Activated T-helper 1 cell treated with anti-CD3 and anti-CD28 coated beads, Interleukin-12 subunit alpha, Interleukin-12 subunit beta, Interleukin-2, Interleukin-4 antibody, amounts not matched to agents 30 ng/mL and 10 ng/mL and 1 ng/mL, durations not matched to agents 14 hours and 24 hours and 36 hours (primary cell): ENCODE measurements at regions of chr1 and their contacts with region 1.

Region 1: DNA sequence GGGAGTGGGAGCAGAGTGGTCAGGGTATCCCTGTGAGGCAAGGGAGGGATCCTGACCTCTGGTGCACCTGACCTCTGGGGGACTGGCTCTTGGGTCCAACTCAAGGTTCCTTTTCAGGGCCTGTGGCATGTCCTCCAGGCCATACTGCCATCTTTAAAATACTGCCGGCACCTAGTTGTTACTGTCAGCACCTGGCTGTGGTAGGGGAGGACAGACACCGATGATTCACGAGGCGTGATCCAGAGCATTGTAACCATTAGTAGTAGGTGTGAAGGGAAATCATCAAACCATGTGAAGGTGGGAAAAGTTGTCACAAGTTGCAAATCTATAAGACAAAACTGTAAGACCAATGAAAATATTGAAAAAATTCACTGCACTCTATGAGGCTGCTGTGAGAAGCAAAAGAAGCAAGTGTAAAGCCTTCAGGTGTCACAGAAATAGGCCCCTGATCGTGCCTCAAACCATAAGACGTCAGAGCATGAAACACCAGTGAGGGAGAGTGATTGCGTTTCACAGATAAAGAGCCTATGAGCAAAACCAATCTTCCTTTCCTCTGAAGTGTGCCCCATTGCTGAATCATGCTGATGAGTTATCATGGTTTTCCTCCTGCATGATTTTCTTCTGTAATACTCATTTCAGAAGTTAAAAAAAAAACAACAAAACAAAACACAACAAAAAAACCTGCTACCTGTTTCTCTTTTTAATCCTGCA is 55.3 kb downstream of the CDC7 start:
- DNase-seq: peak; percentile 79
- H3K4me3 Mint-ChIP-seq: peak overlapping the region; percentile 67
- H3K27ac Mint-ChIP-seq: peak overlapping the region; percentile 83
- H3K4me1 Mint-ChIP-seq: peaks cover 90% of the 10 kb centered on the region
- H3K27me3 Mint-ChIP-seq: no peaks in the 10 kb centered on the region

Region 2: GRCh38 chr1:91412371-91412770 is 143.6 kb before region 1 on chr1:
- intact Hi-C with region 1: no loop called
- DNase-seq: no peak
- H3K4me3 Mint-ChIP-seq: no peak overlapping the region
- H3K27ac Mint-ChIP-seq: no peak overlapping the region
- H3K4me1 Mint-ChIP-seq: no peaks in the 10 kb centered on the region
- H3K27me3 Mint-ChIP-seq: peaks cover 21% of the 10 kb centered on the region

Region 3: DNA sequence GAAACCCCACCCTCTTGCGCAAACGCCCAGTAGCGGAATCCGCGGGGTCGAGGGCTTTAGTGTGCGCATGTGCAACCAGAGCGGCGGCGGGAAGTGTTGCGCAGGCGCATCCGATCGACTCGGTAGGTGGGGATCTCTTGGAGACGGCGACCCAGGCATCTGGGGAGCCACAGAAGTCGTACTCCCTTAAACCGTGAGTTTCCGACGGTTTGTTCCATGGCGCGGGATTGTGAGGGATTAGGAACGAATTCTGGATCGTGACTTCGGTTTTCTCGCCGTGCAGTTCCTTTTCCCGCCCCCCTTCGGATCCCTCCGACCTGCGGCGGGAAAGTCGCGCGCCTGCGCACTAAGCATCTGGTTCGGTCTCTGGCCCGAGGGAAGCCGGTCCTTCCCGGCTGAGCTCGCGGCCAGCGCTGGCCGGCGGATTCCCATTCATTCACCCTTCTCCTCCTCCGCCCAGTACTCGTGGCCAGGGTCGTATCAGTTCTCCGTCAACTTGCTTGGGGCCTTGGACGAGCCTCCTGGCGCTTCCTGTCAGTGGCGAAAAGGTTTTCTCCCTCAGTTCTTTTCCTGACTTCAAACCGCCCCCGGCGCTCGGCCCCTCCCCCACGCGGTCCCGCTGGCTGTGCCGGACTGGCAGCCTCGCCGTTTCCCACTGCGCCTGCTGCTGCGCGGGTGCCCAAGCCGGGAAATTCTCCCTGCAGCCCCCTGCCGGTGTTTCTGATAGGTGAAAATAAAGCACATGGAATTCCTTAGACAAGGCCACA is 55.0 kb before region 1 on chr1 and contains the start of gene CDC7:
- intact Hi-C with region 1: loop called (anchors 2 kb)
- DNase-seq: peak; percentile 81
- H3K4me3 Mint-ChIP-seq: no peak within 1 kb of the TSS
- H3K27ac Mint-ChIP-seq: no peak within 1 kb of the TSS
- H3K4me1 Mint-ChIP-seq: peaks cover 34% of the 10 kb centered on the region
- H3K27me3 Mint-ChIP-seq: no peaks in the 10 kb centered on the region
- total RNA-seq, gene CDC7: 19.9 and 23.1 TPM in 2 replicates

Region 4: GRCh38 chr1:91545506-91546300 is 10.3 kb before region 1 on chr1:
- intact Hi-C with region 1: no loop called
- DNase-seq: no peak
- H3K4me3 Mint-ChIP-seq: no peak overlapping the region
- H3K27ac Mint-ChIP-seq: no peak overlapping the region
- H3K4me1 Mint-ChIP-seq: peaks cover 63% of the 10 kb centered on the region
- H3K27me3 Mint-ChIP-seq: no peaks in the 10 kb centered on the region

Region 5: DNA sequence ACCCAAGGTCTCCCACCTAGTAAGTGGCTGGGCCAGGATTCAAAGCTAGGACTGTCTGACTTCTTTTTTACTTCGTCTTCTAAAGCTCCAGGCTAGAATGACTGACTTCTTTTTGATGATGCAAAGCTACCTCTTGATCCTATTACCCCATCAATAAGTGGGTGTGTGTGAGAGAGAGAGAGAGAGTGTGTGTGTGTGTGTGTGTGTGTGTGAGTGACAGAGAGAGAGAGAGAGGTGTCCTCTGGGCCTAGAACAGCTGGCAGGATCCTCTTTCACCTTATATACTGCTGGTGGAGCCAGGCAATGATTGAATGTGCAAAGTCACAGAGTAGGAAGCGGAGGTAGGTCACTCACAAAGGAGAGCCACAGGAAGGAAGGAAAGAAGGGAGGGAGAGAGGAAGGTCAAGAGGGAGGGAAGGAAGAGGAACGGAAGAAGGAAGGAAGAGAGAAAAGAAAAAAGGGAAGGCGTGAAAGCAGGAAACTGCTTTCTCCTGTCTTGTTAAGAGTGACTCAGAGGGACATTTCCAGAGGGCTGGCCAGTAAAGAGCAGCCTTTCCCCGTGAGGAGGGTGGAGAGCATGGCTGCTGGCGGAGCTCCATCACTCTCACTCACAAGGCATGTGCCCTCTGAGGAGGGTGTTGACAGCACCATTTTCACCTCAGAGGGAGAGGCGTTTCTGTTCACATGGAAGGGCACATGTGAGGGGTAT is 13.6 kb after region 1 on chr1:
- intact Hi-C with region 1: loop called (anchors 1 kb)
- DNase-seq: no peak
- H3K4me3 Mint-ChIP-seq: no peak overlapping the region
- H3K27ac Mint-ChIP-seq: peak overlapping the region; percentile 36
- H3K4me1 Mint-ChIP-seq: peaks cover 32% of the 10 kb centered on the region
- H3K27me3 Mint-ChIP-seq: peaks cover 2% of the 10 kb centered on the region

Region 6: GRCh38 chr1:91673613-91674012 is 117.6 kb after region 1 on chr1:
- intact Hi-C with region 1: loop called (anchors 2 kb)
- DNase-seq: no peak
- H3K4me3 Mint-ChIP-seq: no peak overlapping the region
- H3K27ac Mint-ChIP-seq: peak overlapping the region; percentile 50
- H3K4me1 Mint-ChIP-seq: peaks cover 39% of the 10 kb centered on the region
- H3K27me3 Mint-ChIP-seq: no peaks in the 10 kb centered on the region

Region 7: GRCh38 chr1:91732291-91733107 is 176.5 kb after region 1 on chr1:
- intact Hi-C with region 1: loop called (anchors 1 kb)
- DNase-seq: no peak
- H3K4me3 Mint-ChIP-seq: no peak overlapping the region
- H3K27ac Mint-ChIP-seq: peak overlapping the region; percentile 37
- H3K4me1 Mint-ChIP-seq: peaks cover 51% of the 10 kb centered on the region
- H3K27me3 Mint-ChIP-seq: peaks cover 8% of the 10 kb centered on the region

Region 8: DNA sequence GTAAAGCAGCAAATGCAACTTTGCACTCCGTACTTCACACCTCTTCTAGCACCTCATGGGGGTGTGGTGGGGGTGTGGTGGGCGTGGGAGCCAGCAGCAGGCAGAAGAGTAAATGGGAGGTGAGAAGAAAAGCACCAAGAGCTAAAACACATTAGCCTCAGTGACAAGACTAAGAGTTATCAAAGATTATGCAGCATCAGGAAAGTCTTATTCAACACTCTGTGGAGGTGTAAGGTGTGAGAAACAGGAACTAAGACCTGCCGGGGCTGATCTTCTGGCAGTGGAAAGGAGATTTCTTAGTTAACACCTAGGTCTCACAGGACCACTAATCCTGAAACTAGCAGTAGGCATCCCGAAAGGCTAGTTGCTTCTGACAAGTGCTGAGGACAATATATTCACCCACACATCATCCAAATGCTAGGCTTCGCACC is 320.1 kb after region 1 on chr1:
- intact Hi-C with region 1: loop called (anchors 1 kb)
- DNase-seq: no peak
- H3K4me3 Mint-ChIP-seq: peak overlapping the region; percentile 37
- H3K27ac Mint-ChIP-seq: peak overlapping the region; percentile 71
- H3K4me1 Mint-ChIP-seq: peaks cover 72% of the 10 kb centered on the region
- H3K27me3 Mint-ChIP-seq: peaks cover 6% of the 10 kb centered on the region

Region 9: DNA sequence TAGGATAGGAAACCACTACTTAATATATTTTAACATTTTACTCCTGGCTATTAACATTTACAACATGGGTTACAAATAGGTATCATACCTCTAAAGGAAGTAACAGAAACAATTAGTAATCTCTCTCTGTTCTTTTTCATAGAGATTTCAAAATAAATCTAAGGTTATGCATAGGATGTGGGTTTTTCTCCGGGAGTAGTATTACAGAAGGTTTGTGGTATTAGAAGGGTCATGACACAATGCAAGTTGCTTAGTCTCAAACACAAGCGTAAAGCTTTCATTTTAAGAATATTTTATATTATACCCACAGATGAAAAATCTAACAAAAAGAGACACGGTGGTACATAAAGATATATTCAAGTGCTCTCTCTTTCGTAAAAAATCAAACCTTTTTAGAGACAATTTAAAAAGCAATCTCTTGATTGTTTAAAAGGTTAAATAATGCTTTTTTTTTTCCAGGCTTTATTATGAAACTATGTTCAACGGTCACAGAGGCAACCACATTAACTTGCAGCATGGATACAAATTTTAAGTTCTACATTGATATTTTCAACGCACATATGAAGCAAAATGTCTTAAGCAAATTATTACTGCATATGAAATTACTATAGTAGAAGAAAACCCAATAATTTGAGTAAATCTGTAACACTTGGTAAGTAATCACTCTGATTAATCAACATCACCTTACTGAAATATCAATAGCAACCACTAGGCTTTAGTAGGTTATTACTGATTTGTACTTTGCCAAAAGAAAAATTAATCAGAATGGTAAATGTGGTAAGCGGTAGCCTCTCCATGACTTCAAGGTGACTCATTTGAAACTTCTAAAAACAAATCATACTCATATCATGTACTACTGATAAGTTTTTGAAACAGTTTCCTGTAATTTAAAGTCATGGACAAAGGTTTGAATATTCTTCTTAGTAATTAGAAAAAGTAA is 1028.1 kb after region 1 on chr1:
- intact Hi-C with region 1: loop called (anchors 2 kb)
- DNase-seq: no peak
- H3K4me3 Mint-ChIP-seq: peak overlapping the region; percentile 62
- H3K27ac Mint-ChIP-seq: peak overlapping the region; percentile 91
- H3K4me1 Mint-ChIP-seq: peaks cover 75% of the 10 kb centered on the region
- H3K27me3 Mint-ChIP-seq: no peaks in the 10 kb centered on the region